Panc1 (cell line): ENCODE measurements at regions of chr14 and their contacts with region 1.

Region 1: DNA sequence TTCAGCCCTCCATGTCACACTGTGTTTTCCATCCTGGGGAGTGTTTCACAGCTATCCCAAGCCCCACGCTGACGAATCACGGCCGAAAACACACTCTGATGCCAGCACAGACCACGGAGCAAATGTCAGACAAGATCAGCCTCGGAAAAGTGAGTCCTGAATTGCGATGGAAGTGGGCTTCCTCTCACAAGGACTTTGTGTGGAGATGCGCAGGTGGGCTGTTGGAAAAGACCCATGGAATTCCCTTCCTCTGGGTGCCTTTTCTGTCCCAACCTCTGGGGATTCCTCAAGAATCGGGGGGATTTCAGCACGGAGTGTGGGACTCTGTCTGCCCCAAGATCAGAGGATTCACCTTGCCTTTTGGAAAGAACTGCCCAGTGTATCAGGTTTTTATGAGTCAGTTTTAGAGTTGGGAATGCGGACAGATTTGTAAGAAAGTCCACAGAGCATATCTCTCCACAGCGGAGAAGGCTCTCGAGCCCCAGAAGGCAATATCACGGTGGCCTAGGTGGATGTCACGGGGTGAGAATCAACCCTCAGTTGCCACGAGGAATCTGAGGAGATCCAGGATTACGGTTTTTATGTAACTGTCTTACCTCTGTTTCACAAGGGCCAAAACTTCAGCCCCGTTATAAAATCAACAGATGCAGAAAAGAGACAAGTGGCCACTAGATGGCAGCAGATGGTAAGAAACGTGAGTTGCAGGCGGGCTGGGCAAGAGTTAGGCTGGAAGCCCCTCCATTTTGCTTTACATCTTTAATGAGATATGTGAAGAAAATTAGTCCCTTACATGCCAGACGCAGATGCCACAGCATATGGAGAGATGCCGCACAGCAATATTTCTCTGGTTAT is 201.9 kb downstream of the DAD1 start:
- DNase-seq: peak; percentile 50
- ATAC-seq: peak; percentile 71
- H3K4me3 ChIP-seq: no peak overlapping the region
- H3K27ac ChIP-seq: no peak overlapping the region
- H3K4me1 ChIP-seq: no peaks in the 10 kb centered on the region
- H3K27me3 ChIP-seq: no peaks in the 10 kb centered on the region; the same call in 1 of the 2 replicates
- CTCF ChIP-seq: peak; percentile 79

Region 2: GRCh38 chr14:22231018-22231417 is 156.1 kb before region 1 on chr14:
- CTCF ChIA-PET with region 1: no interaction called
- POLR2A ChIA-PET with region 1: no interaction called
- in situ Hi-C with region 1: no loop called
- intact Hi-C with region 1: no loop called
- DNase-seq: no peak
- ATAC-seq: no peak
- H3K4me3 ChIP-seq: no peak overlapping the region
- H3K27ac ChIP-seq: no peak overlapping the region
- H3K4me1 ChIP-seq: no peaks in the 10 kb centered on the region
- H3K27me3 ChIP-seq: peaks cover 2% of the 10 kb centered on the region; the same call in 1 of the 2 replicates
- CTCF ChIP-seq: no peak

Region 3: DNA sequence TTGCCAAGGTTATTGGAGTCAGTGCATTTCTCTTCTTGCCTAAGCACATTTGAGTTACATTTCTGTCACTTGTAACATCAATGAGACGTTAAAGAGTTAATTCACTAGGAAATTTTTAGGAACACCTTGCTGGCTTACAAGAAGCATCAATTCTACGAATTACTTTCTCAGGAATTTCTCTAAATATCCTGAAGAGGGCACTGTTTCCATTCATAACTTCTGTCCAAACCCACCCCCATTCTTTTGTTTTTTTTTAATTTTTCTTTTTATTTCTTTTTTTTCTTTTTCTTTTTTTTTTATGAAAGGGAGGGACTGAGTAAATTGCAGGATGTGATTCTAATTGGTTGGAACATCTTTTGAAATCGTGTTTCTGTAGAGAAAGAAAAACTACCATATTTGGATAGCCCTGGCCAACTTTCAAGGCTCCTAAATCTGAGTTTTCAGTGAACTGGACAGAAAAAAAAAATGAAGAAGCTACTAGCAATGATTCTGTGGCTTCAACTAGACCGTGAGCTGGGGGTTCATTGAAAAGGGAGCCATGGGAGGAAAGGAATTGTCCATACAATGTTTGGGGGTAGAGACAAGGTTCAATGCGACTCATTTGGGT is 83.5 kb before region 1 on chr14:
- CTCF ChIA-PET with region 1: no interaction called
- POLR2A ChIA-PET with region 1: no interaction called
- in situ Hi-C with region 1: no loop called
- intact Hi-C with region 1: no loop called
- DNase-seq: no peak
- ATAC-seq: no peak
- H3K4me3 ChIP-seq: no peak overlapping the region
- H3K27ac ChIP-seq: no peak overlapping the region
- H3K4me1 ChIP-seq: no peaks in the 10 kb centered on the region
- H3K27me3 ChIP-seq: peaks cover 3% of the 10 kb centered on the region; the same call in 1 of the 2 replicates
- CTCF ChIP-seq: peak; percentile 58; the same call in 1 of the 2 replicates

Region 4: GRCh38 chr14:22472935-22473854 is 86.0 kb after region 1 on chr14:
- CTCF ChIA-PET with region 1: interaction called, 4 read pairs
- POLR2A ChIA-PET with region 1: no interaction called
- in situ Hi-C with region 1: no loop called
- intact Hi-C with region 1: loop called (anchors 2 kb)
- DNase-seq: no peak
- ATAC-seq: no peak
- H3K4me3 ChIP-seq: no peak overlapping the region
- H3K27ac ChIP-seq: no peak overlapping the region
- H3K4me1 ChIP-seq: no peaks in the 10 kb centered on the region
- H3K27me3 ChIP-seq: no peaks in the 10 kb centered on the region; the same call in none of the 2 replicates
- CTCF ChIP-seq: peak; percentile 58

Region 5: DNA sequence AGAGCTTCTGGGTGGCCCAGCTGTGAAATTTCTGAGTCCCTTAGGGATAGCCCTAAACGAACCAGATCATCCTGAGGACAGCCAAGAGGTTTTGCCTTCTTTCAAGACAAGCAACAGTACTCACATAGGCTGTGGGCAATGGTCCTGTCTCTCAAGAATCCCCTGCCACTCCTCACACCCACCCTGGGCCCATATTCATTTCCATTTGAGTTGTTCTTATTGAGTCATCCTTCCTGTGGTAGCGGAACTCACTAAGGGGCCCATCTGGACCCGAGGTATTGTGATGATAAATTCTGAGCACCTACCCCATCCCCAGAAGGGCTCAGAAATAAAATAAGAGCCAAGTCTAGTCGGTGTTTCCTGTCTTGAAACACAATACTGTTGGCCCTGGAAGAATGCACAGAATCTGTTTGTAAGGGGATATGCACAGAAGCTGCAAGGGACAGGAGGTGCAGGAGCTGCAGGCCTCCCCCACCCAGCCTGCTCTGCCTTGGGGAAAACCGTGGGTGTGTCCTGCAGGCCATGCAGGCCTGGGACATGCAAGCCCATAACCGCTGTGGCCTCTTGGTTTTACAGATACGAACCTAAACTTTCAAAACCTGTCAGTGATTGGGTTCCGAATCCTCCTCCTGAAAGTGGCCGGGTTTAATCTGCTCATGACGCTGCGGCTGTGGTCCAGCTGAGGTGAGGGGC is 163.0 kb after region 1 on chr14:
- CTCF ChIA-PET with region 1: no interaction called
- POLR2A ChIA-PET with region 1: no interaction called
- in situ Hi-C with region 1: no loop called
- intact Hi-C with region 1: loop called (anchors 5 kb)
- DNase-seq: no peak
- ATAC-seq: no peak
- H3K4me3 ChIP-seq: no peak overlapping the region
- H3K27ac ChIP-seq: no peak overlapping the region
- H3K4me1 ChIP-seq: no peaks in the 10 kb centered on the region
- H3K27me3 ChIP-seq: no peaks in the 10 kb centered on the region
- CTCF ChIP-seq: no peak

Region 6: DNA sequence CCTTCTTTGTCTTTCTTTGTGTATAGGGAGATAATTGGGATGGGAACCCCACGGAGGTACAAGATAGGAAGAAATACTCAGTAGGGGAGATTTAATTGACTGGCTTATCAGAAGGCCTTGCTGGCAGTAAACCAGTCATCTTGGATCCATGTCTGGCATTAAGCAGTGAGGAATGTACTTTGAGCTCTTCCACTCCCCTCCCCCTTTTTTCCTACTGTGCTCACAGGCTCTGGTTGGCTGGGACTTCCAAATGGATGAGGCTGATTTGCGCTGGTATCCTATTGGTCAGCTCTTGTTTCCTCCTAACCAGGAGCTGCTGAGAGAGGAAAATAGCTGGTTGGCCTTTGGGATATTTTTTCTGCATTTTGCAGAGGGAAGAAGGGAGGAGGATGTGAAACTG is 1107.1 kb after region 1 on chr14:
- CTCF ChIA-PET with region 1: no interaction called
- POLR2A ChIA-PET with region 1: no interaction called
- in situ Hi-C with region 1: no loop called
- intact Hi-C with region 1: no loop called
- DNase-seq: no peak
- ATAC-seq: no peak
- H3K4me3 ChIP-seq: no peak overlapping the region
- H3K27ac ChIP-seq: no peak overlapping the region
- H3K4me1 ChIP-seq: no peaks in the 10 kb centered on the region
- H3K27me3 ChIP-seq: no peaks in the 10 kb centered on the region
- CTCF ChIP-seq: no peak